Calu3 (cell line): ENCODE measurements at regions of chr1 and their contacts with region 1.

Region 1: DNA sequence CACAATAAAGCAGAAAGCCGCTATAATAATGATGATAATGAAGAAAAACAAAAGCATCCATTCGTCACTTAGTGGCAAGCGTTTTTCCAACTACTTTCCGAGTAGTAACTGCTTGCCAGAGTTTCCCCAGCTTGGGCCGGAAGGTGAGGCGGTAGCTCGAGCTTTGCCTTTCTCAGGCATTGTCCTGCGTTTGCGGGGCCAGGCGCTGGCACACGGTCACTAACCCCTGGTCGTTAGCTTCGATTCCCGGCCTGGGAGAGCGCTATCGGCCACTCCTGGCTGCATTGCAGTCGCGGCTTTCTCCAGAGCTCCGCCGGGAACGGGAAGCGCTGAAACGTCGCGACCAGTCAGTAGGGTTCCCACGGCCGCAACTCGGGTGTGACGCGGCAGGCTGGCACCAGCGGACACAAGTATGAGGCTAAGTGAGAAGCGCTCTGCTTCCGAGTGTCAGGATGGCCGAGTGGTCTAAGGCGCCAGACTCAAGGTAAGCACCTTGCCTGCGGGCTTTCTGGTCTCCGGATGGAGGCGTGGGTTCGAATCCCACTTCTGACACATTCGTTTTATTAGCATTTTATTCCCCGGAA is 14.6 kb upstream of the ZNF692 start:
- DNase-seq: peak; percentile 98
- H3K4me3 Mint-ChIP-seq: peak overlapping the region; percentile 91
- H3K27ac Mint-ChIP-seq: peak overlapping the region; percentile 99
- H3K4me1 Mint-ChIP-seq: peaks cover 30% of the 10 kb centered on the region
- H3K27me3 Mint-ChIP-seq: peaks cover 16% of the 10 kb centered on the region
- CTCF ChIP-seq: no peak

Region 2: GRCh38 chr1:247865416-247865815 is 1008.1 kb before region 1 on chr1:
- CTCF ChIA-PET with region 1: no interaction called
- intact Hi-C with region 1: no loop called
- DNase-seq: no peak
- H3K4me3 Mint-ChIP-seq: no peak overlapping the region
- H3K27ac Mint-ChIP-seq: no peak overlapping the region
- H3K4me1 Mint-ChIP-seq: no peaks in the 10 kb centered on the region
- H3K27me3 Mint-ChIP-seq: no peaks in the 10 kb centered on the region
- CTCF ChIP-seq: no peak

Region 3: GRCh38 chr1:248825909-248826760 is 47.4 kb before region 1 on chr1 and contains the start of gene SH3BP5L:
- CTCF ChIA-PET with region 1: interaction called, 11 read pairs
- intact Hi-C with region 1: loop called (anchors 1 kb)
- DNase-seq: peak; percentile 91
- H3K4me3 Mint-ChIP-seq: peak within 1 kb of the TSS; percentile 84
- H3K27ac Mint-ChIP-seq: peak within 1 kb of the TSS; percentile 93
- H3K4me1 Mint-ChIP-seq: peaks cover 36% of the 10 kb centered on the region
- H3K27me3 Mint-ChIP-seq: no peaks in the 10 kb centered on the region
- CTCF ChIP-seq: peak; percentile 77
- total RNA-seq, gene SH3BP5L: 25.3 and 27.1 TPM in 2 replicates

Region 4: DNA sequence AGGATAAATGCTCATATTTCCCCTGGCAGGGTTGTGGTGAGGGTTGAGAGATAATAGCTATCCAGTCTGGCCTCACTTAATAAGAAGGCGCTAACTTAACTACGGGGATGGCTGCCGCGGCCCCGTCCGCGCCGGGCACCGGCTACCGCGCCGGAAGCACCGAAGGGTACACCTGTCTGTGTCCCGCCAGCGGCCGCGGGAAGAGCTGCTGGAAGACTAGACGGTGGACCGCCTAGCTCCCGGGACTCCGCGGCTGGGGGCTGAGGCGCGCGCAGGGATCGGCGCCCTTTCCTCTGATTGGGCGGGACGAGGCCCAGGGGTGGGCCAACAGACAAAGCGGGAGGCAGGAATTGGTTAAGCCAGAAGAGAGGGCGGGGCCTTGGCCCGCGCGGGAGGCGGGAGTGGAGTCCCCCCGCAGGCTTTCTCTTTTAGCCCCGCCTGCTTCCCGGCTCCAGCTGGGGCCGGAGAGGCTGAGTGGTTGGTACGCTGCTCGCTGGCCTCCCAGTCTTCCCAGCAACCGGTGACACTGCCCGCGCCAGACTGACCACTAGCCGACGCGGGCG is 35.6 kb before region 1 on chr1 and contains the start of gene ZNF672:
- CTCF ChIA-PET with region 1: interaction called, 4 read pairs
- intact Hi-C with region 1: loop called (anchors 1 kb)
- DNase-seq: peak; percentile 99
- H3K4me3 Mint-ChIP-seq: no peak within 1 kb of the TSS
- H3K27ac Mint-ChIP-seq: no peak within 1 kb of the TSS
- H3K4me1 Mint-ChIP-seq: no peaks in the 10 kb centered on the region
- H3K27me3 Mint-ChIP-seq: no peaks in the 10 kb centered on the region
- CTCF ChIP-seq: no peak
- total RNA-seq, gene ZNF672: 28.3 and 28.7 TPM in 2 replicates

Region 5: GRCh38 chr1:248858891-248859889 is 14.3 kb before region 1 on chr1 and contains the start of gene ZNF692:
- CTCF ChIA-PET with region 1: interaction called, 9 read pairs
- intact Hi-C with region 1: loop called (anchors 2 kb)
- DNase-seq: peak; percentile 97
- H3K4me3 Mint-ChIP-seq: peak within 1 kb of the TSS; percentile 90
- H3K27ac Mint-ChIP-seq: peak within 1 kb of the TSS; percentile 88
- H3K4me1 Mint-ChIP-seq: peaks cover 25% of the 10 kb centered on the region
- H3K27me3 Mint-ChIP-seq: peaks cover 16% of the 10 kb centered on the region
- CTCF ChIP-seq: no peak
- total RNA-seq, gene ZNF692: 61.4 and 61.5 TPM in 2 replicates

Region 6: DNA sequence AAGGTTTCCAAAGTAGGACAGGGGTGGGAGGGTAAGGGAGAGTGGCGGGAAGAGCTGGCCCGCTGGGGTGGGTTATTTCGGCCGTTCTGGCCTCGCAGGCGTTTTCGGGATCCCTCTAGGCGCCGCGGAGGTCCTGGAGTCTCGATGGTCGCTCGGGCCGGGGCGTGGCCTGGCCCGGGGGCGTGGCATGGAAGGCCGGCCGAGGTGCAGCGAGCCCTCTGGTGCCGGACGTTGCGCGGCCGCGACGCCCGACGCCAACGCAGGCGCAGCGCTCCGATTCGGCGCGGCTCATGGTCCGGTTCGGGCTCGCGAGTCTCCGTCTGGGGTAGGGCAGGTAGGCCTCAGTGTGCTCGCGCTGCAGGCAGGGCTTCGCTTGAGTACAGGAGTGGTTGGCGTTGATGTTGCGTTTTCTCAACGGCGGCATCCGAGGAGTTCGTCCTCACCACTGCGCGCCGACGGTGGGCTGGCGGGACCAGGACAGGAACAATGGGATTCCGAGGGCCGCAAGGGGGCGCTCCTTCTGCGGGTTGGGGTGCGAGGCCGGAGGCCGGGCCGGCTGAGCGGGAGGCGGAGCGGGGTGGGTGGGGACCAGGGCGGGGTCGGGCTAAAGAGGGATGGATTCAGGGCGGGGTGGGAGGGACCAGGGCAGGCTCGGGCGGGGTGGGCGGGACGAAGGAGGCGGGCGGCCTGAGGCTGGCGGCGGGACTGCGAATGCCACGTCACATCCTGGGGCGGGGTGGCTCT is 32.7 kb after region 1 on chr1 and contains the start of gene PGBD2:
- CTCF ChIA-PET with region 1: no interaction called
- intact Hi-C with region 1: loop called (anchors 1 kb)
- DNase-seq: peak; percentile 97
- H3K4me3 Mint-ChIP-seq: peak within 1 kb of the TSS; percentile 75
- H3K27ac Mint-ChIP-seq: peak within 1 kb of the TSS; percentile 85
- H3K4me1 Mint-ChIP-seq: peaks cover 19% of the 10 kb centered on the region
- H3K27me3 Mint-ChIP-seq: peaks cover 3% of the 10 kb centered on the region
- CTCF ChIP-seq: peak; percentile 64
- total RNA-seq, gene PGBD2: 7.3 and 7.8 TPM in 2 replicates